ENCODE measurements at regions of chr7 and their contacts with region 1.

Region 1: DNA sequence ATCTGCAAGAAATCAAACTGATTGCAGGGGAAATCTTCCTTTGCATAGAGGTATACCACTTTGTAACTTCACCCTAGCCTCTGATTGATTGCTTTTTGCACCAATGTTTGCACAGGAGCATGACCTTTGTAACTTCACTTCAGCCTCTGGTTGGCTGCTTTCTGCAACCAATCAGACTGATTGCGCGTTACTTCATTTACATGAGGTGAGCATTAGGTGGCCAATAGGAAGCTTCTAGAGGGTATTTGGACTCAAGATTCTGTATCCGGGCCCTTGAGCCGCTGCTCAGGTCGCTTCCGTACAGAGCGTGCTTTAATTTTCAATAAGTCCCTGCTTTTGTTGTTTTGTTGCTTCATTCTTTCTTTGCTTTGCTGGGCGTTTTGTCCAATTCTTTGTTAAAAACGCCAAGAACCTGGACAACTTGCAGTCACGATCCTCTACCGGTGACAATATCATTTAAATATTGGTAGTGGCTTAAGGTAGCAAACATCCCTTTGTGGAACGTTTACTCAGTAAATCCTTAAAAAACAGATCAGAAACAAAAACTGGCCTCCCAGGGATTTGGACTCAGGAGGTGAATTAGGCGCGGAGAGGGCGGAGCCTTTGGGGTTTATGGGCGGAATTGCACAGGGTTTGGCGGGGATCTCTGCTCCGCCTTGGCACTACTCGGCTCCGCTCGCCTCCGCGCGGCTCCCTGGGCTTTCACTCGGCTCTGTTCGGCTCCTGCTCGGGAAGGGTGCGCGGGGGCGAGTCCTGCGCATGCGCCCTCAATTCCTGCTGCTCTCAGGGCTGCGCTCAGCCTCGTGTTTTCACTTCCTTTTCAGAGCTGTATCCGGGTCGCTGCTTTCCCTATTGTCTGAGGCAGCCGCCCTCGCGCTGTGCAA is at the start of gene PHF14:
- DNase-seq: peak; percentile 99
- total RNA-seq, gene PHF14: 32.7 to 36.6 TPM

Region 2: DNA sequence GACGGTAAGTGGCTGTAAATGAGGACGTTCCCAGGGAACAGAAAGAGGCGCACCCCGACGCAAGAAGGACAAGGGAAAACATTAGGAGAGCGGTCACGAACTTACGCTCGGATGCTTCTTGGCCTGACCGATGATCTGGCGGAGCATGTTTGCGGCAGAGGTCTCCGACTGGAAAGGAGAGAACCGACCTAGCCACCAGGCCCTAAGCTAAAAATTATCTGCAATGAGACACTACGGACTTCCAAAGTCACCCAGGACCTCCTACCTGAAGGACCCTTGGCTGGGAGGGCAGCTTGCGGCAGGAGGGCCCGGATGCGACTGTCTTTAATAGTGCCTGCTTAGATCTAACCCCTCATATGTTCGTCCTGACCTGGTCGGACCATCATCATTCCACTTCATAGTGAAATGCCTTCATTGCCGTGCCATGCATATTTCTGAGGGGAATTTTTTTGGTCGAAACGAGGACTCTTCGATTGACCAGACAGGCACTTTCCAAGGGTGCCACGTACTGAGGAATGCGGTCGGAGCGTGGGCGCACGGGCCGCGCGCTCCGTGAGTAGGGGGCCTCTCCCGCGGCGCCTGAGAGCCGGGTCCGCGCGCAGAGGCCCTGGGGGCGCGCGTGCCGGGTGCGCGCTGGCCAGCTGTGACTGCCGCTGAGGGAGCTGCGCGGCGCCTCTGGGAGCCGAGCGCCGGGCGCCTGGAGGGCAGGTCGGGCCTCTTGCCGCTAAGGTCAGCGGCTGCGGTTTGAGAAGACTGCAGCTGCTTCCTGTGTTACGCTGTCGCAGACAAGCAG is 33.2 kb before region 1 on chr7:
- intact Hi-C with region 1: loop called in 1 of 2 experiments (anchors 5 kb)
- DNase-seq: peak; percentile 96

Region 3: GRCh38 chr7:10950494-10950893 is 22.8 kb before region 1 on chr7:
- intact Hi-C with region 1: loop called in 1 of 2 experiments (anchors 1 kb)
- DNase-seq: no peak

Region 4: DNA sequence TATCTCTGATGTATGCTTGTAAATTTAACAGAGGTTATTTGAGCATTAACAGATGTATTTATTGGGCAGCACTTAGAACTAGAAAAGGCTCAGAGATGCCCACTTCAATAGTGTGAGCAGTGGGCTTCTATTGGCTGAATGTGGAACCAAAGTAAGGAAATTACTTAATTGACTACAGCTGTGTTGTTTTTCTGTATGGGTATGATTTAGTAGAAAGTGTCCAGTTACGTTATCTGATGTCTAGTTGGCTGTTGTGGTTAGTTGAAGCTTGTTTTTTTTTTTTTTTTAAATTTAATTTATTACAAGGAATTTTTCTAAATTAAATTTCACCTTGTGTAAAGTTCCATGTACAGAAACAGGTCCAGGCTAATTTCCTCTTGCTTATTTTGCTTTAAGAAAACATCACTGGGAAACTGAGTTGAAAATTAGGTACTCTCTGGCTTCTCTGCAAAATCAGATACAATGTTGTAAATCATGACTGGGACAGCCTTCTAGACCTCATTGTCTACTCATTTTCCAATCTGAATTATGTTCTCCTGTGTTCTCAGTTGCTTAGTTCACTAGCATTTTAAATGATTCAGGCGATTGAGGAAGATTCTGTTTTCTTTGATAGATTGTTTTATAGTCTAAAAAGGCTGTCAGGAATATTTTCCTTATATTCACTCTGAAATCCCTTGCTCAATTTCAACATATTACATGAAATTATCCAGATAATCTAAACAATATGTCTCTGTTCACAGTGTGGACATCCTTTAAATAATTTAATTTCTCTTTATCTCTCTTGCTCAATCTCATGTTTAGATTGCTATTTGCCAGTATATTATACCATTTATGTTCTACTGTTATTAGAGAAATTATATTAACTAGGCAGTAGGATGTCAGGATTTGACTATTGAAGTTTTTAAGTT is 53.4 kb after region 1 on chr7:
- intact Hi-C with region 1: no loop called
- DNase-seq: no peak